RWPE1 (cell line): ENCODE measurements at regions of chr6 and their contacts with region 1.

Region 1: GRCh38 chr6:30130887-30131862 is 4.8 kb upstream of the TRIM40 start:
- DNase-seq: peak; percentile 84
- H3K27ac ChIP-seq: no peak overlapping the region
- CTCF ChIP-seq: peak; percentile 97

Region 2: DNA sequence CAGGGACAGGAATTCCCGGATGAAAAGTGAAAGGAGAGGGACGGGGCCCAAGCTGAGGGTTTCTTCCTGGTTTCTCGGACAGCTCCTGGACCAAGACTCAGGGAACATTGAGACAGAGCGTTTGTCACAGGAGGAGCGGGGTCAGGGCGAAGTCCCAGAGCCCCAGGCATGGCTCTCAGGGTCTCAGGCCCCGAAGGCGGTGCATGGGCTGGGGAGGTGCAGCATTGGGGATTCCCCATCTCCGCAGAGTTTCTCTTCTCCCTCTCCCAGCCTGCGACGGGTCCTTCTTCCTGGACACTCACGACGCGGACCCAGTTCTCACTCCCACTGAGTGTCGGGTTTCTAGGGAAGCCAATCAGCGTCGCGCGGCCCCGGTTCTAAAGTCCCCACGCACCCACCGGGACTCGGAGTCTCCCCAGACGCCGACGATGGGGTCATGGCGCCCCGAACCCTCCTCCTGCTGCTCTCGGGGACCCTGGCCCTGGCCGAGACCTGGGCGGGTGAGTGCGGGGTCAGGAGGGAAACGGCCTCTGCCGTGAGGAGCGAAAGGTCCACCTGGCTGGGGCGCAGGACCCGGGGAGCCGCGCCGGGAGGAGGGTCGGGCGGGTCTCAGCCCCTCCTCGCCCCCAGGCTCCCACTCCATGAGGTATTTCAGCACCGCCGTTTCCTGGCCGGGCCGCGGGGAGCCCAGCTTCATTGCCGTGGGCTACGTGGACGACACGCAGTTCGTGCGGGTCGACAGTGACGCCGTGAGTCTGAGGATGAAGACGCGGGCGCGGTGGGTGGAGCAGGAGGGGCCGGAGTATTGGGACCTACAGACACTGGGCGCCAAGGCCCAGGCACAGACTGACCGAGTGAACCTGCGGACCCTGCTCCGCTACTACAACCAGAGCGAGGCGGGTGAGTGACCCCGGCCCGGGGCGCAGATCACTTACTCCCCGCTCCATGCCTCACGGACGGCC is 124.7 kb before region 1 on chr6:
- CTCF ChIA-PET with region 1: no interaction called
- POLR2A ChIA-PET with region 1: no interaction called
- DNase-seq: no peak
- H3K27ac ChIP-seq: no peak overlapping the region
- CTCF ChIP-seq: no peak

Region 3: GRCh38 chr6:30147062-30147461 is 15.9 kb after region 1 on chr6:
- CTCF ChIA-PET with region 1: interaction called, 12 read pairs
- POLR2A ChIA-PET with region 1: no interaction called
- DNase-seq: no peak
- H3K27ac ChIP-seq: no peak overlapping the region
- CTCF ChIP-seq: no peak